ENCODE measurements at regions of chr9 and their contacts with region 1.

Region 1: DNA sequence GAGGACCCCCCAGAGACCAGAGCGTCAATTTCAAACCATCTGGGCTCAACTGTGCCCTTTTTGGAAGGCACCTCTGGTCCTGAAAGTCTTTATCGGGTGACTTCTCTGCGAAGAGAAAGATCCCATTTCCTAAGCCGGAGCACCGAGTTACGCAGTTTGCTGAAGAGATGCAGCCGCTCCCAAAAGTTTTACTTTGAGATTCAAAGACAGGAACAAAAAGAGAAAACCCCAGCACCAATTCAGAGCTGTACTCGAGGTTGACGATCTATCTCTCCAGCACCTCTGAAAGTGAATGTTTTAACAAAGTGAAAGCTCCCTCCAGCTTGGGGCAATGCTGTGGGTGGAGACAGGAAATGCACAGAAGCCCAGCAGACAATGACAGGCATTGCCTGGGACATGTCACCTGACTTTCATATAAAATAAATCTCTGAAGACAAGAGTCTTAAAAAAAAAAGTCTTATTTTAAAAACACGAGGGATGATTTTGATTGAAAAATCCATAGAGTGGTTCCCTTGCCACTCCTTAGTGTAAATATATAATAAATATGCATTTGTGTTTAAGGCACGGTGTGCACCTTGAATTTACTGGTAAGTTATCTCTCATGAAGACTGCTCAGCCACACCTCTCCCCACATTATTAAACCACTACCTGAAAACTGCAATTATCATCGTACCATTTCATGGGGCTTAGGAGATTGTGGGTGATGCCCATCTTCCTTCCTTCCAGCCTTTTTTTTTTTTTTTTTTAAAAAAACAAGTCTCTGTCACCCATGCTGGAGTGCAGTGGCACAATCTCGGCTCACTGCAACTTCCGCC is 79.9 kb downstream of the FNBP1 start:
- DNase-seq: peak; percentile 65
- H3K4me3 ChIP-seq: peak overlapping the region; percentile 22 to 40
- H3K27ac ChIP-seq: peak overlapping the region; percentile 71 to 86
- H3K4me1 ChIP-seq: no peaks in the 10 kb centered on the region
- H3K27me3 ChIP-seq: no peaks in the 10 kb centered on the region
- CTCF ChIP-seq: no peak
- POLR2A ChIP-seq: peak; percentile 63

Region 2: GRCh38 chr9:130042833-130043653 is 79.9 kb after region 1 on chr9 and contains the start of gene FNBP1:
- intact Hi-C with region 1: loop called (anchors 5 kb)
- DNase-seq: peak; percentile 76
- H3K4me3 ChIP-seq: peak within 1 kb of the TSS; percentile 80 to 99
- H3K27ac ChIP-seq: peak within 1 kb of the TSS; percentile 95
- H3K4me1 ChIP-seq: peaks cover 10% of the 10 kb centered on the region
- H3K27me3 ChIP-seq: no peaks in the 10 kb centered on the region
- CTCF ChIP-seq: no peak
- POLR2A ChIP-seq: peak; percentile 90
- total RNA-seq, gene FNBP1: 34.6 to 93.7 TPM

Region 3: DNA sequence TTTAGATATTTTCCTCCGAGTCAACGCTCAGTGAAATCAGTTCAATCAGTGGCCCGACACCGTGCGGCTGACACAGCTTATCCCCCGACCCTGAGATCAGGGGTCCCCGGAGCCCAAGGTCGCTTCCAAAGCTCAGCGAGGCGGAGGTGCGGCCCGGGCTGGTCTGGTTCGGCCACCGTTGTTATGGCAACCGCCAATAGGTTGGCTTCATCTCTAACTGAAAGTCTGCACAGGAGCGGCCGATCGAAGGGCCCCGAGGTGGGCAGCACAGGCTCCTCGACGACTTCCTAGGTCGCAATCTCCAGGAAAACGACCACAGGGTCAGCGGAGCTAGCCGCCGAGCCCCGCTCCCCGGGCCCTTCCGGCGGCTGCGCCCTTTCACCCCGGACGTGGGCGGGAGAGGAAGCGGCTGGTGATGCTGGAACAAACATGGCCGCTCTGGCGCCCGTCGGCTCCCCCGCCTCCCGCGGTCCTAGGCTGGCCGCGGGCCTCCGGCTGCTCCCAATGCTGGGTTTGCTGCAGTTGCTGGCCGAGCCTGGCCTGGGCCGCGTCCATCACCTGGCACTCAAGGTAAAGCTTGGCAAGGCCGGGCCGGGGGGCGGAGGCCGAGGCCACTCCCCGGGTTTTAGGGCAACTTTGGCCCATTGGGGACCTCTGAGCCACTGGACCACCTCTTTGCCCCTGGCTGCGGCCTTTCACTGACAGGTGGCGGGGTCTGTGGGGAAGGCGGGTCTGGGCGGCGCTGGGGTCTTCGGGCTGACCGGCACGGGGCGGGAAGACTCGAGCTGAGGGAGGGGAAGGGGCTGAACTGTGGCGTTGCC is 90.6 kb after region 1 on chr9 and contains the start of gene GPR107:
- intact Hi-C with region 1: no loop called
- DNase-seq: peak; percentile 61
- H3K4me3 ChIP-seq: peak within 1 kb of the TSS; percentile 93 to 95
- H3K27ac ChIP-seq: peak within 1 kb of the TSS; percentile 90 to 91
- H3K4me1 ChIP-seq: peaks cover 13% of the 10 kb centered on the region
- H3K27me3 ChIP-seq: no peaks in the 10 kb centered on the region
- CTCF ChIP-seq: peak in 1 of 4 experiments; percentile 6
- POLR2A ChIP-seq: peak; percentile 69
- total RNA-seq, gene GPR107: 36.3 to 51.5 TPM

Region 4: DNA sequence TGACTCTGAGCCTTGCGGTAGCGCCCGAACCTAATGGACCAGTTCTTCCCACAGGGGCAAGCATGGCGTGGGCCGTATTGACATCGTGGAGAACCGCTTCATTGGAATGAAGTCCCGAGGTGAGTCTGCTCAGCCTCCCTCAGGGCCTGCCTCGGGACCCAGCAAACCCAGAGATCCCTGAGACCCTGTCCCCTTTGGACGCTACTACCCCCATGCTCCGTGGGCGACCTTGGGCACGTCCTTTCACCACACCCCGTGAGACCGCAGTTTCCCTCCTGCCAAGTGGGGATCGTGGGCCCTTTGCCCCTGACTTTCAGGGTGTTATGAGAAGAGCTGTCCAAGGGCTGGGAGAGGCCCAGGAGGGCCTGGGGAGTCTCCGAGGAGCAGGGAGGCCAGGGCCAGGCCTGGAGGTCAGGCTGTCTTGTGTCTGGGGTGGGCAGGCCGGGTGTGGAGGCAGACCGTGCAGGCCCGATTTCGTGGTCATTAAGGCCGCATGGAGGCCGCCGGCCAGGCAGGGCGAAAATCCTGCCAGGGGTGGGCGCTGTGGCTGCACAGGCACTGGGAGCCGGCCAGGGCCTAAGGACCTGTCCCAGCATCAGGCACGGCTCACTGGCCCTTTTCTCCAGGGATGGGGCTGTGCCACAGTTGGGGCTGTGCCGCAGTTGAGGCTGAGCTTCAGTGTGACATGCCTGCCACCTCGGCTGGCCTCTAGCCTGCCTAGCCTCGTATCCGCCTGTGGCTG is 517.4 kb after region 1 on chr9:
- intact Hi-C with region 1: no loop called
- DNase-seq: no peak
- H3K4me3 ChIP-seq: no peak overlapping the region
- H3K27ac ChIP-seq: no peak overlapping the region
- H3K4me1 ChIP-seq: no peaks in the 10 kb centered on the region
- H3K27me3 ChIP-seq: no peaks in the 10 kb centered on the region
- CTCF ChIP-seq: no peak
- POLR2A ChIP-seq: no peak

Measured in prostate gland (tissue), 2 donors.